Activated CD4-positive, alpha-beta T cell treated with anti-CD3 and anti-CD28 coated beads, Interleukin-2, amount 10 ng/mL, durations not matched to agents 24 days and 14 days (primary cell): ENCODE measurements at regions of chr15 and their contacts with region 1.

Region 1: GRCh38 chr15:41493205-41493901 is at the start of gene ITPKA:
- DNase-seq: peak; percentile 95
- H3K4me3 Mint-ChIP-seq: peak within 1 kb of the TSS; percentile 75
- H3K27ac Mint-ChIP-seq: peak within 1 kb of the TSS; percentile 84
- H3K4me1 Mint-ChIP-seq: peaks cover 36% of the 10 kb centered on the region
- H3K27me3 Mint-ChIP-seq: peaks cover 30% of the 10 kb centered on the region
- total RNA-seq, gene ITPKA: 3.3 and 3.8 TPM in 2 replicates

Region 2: GRCh38 chr15:40405501-40406381 is 1087.6 kb before region 1 on chr15 and contains the start of gene IVD:
- intact Hi-C with region 1: no loop called
- DNase-seq: peak; percentile 94
- H3K4me3 Mint-ChIP-seq: peak within 1 kb of the TSS; percentile 82
- H3K27ac Mint-ChIP-seq: peak within 1 kb of the TSS; percentile 77
- H3K4me1 Mint-ChIP-seq: peaks cover 41% of the 10 kb centered on the region
- H3K27me3 Mint-ChIP-seq: no peaks in the 10 kb centered on the region
- total RNA-seq, gene IVD: 66.6 and 70.7 TPM in 2 replicates

Region 3: DNA sequence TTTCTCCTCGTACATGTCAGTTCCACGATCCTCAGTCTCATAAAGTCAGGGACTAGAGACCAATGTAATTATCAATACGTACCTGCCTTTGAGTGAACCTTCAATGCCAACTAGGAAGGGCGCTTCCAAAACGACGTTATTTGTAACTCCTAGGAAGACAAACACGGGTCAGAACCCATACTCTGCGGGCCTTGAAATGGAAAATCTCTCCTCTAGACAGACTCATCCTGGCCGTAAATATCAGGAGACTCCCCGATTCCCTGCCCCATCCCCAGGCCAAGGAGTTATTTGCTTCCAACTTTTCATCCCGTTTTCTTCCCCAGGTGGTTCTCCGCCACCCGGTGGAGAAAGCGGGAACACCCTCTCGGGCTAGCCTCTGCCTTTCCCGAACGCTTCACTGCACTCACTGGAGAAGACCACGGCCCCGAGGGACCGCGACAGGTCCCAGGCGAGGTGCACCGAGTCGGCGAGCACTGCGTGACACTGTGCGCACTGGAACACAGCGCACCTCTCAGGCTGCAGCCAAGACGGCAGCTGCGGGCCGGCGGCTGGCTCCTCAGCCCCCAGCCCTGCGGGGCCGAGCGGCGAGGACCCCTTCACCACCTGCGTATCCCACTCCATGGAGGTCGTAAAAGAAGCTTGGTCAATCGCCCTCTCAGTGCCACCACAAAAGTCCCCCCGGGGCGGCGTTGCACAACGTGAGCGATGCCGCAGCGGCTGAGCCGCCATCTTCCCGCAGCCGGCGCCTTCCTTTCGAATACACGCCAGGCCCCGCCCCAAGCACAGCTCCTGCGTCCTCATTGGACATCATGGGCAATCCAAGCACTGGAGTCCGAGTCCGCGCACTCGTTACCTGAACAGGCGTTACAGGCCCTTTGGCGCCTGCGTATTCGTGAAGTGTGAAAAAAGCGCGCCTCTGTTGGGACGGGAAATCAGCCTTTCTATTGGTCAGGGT is 161.2 kb before region 1 on chr15 and contains the start of gene OIP5:
- intact Hi-C with region 1: loop called (anchors 2 kb)
- DNase-seq: peak; percentile 100
- H3K4me3 Mint-ChIP-seq: peak within 1 kb of the TSS; percentile 95
- H3K27ac Mint-ChIP-seq: peak within 1 kb of the TSS; percentile 98
- H3K4me1 Mint-ChIP-seq: peaks cover 29% of the 10 kb centered on the region
- H3K27me3 Mint-ChIP-seq: no peaks in the 10 kb centered on the region
- total RNA-seq, gene OIP5: 15.8 and 21.0 TPM in 2 replicates

Region 4: DNA sequence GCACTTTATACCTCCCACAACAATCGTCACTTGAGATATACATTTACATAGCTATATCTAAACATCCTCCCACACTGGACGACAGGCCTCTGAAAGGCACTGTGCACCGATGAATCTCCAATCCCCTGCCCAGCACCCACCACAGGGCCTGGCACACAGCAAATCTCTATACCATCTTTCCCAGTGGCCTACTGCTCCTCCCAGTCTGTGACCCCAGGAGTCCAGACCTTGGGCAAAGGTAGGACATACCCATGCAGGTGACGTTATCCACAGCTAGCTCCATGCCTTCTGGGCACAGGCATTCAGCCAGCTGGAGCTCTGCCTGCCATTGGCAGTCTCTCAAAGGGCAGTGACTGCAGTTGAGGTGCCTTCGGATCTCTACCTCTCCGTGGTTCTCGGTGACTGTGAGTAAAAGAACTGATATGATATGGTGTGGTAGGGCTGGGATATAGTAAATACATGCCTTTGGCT is 14.5 kb after region 1 on chr15:
- intact Hi-C with region 1: no loop called
- DNase-seq: no peak
- H3K4me3 Mint-ChIP-seq: no peak overlapping the region
- H3K27ac Mint-ChIP-seq: no peak overlapping the region
- H3K4me1 Mint-ChIP-seq: peaks cover 11% of the 10 kb centered on the region
- H3K27me3 Mint-ChIP-seq: peaks cover 63% of the 10 kb centered on the region

Region 5: GRCh38 chr15:41621200-41622193 is 128.1 kb after region 1 on chr15:
- intact Hi-C with region 1: loop called (anchors 5 kb)
- DNase-seq: peak; percentile 92
- H3K4me3 Mint-ChIP-seq: peak overlapping the region; percentile 84
- H3K27ac Mint-ChIP-seq: peak overlapping the region; percentile 88
- H3K4me1 Mint-ChIP-seq: peaks cover 13% of the 10 kb centered on the region
- H3K27me3 Mint-ChIP-seq: peaks cover 17% of the 10 kb centered on the region

Region 6: GRCh38 chr15:41936649-41937567 is 443.6 kb after region 1 on chr15:
- intact Hi-C with region 1: loop called (anchors 5 kb)
- DNase-seq: peak; percentile 94
- H3K4me3 Mint-ChIP-seq: peak overlapping the region; percentile 75
- H3K27ac Mint-ChIP-seq: peak overlapping the region; percentile 100
- H3K4me1 Mint-ChIP-seq: peaks cover 70% of the 10 kb centered on the region
- H3K27me3 Mint-ChIP-seq: no peaks in the 10 kb centered on the region

Region 7: DNA sequence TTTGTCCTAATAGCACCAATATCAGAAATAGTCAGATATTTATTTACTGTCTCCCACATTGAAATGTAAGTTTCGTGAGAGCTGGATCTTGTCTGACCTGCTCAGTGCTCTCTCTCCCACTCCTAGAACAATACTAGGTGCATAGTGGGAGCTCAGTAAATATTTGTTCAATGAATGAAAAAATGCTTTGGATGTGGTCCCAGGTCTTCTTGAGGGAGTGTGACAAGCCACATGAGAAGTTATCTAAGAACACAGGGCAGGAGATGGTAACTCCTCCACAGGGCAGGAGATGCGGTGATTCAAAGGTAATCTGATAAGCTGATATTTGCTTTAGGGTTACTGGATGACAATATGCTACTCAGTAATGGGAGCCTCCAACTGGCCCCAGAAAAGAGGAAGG is 553.2 kb after region 1 on chr15:
- intact Hi-C with region 1: no loop called
- DNase-seq: no peak
- H3K4me3 Mint-ChIP-seq: no peak overlapping the region
- H3K27ac Mint-ChIP-seq: no peak overlapping the region
- H3K4me1 Mint-ChIP-seq: peaks cover 8% of the 10 kb centered on the region
- H3K27me3 Mint-ChIP-seq: peaks cover 9% of the 10 kb centered on the region